SK-MEL-5 (cell line): ENCODE measurements at regions of chr7 and their contacts with region 1.

Region 1: GRCh38 chr7:21261627-21262594 is 166.0 kb upstream of the SP4 start:
- DNase-seq: peak; percentile 81

Region 2: GRCh38 chr7:20858951-20859350 is 403.0 kb before region 1 on chr7:
- in situ Hi-C with region 1: no loop called
- DNase-seq: no peak

Region 3: GRCh38 chr7:21507626-21508343 is 245.9 kb after region 1 on chr7:
- in situ Hi-C with region 1: loop called (anchors 25 kb)
- DNase-seq: peak; percentile 84